Body of pancreas (tissue), 4 donors: ENCODE measurements at regions of chr5 and their contacts with region 1.

Region 1: GRCh38 chr5:103232393-103232999 is 26.1 kb upstream of the MACIR start:
- DNase-seq: peak; percentile 25 to 42 (median 32)
- ATAC-seq: peak; percentile 80
- H3K4me3 ChIP-seq: no peak overlapping the region
- H3K27ac ChIP-seq: no peak overlapping the region
- H3K4me1 ChIP-seq: no peaks in the 10 kb centered on the region
- H3K27me3 ChIP-seq: no peaks in the 10 kb centered on the region
- CTCF ChIP-seq: peak; percentile 82 to 93 (median 92)
- POLR2A ChIP-seq: no peak

Region 2: DNA sequence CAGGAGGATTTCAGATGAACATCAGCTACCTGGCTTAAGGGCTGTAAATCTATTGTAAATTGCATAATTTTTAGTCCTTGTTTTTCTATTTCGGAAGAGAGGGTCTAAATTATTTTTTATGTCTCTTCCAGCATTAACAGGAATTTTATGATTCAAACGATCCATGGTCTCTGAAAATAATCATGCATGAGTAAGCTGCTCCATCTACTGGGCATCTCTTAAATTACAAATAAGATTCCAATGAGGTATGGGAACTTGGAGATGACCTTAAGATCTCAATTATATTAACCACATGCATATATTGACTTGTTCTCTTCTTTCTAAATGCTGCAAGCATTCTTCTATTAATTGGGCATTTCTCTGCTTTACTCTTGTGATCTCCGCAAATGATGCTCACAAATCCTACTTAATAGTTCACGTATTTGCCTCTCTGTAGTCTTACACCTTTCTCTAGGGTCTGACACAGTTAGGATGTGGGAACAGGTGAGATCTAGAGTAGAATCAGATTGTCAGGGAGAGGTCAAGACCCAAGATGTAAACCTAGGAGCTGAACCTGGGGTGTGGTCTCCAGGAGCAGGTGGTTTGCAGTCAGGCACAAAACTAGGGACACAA is 243.2 kb after region 1 on chr5:
- intact Hi-C with region 1: loop called (anchors 10 kb)
- DNase-seq: no peak
- ATAC-seq: peak; percentile 75
- H3K4me3 ChIP-seq: no peak overlapping the region
- H3K27ac ChIP-seq: no peak overlapping the region
- H3K4me1 ChIP-seq: peaks cover 5% of the 10 kb centered on the region
- H3K27me3 ChIP-seq: no peaks in the 10 kb centered on the region
- CTCF ChIP-seq: peak; percentile 27 to 88 (median 79)
- POLR2A ChIP-seq: no peak